ENCODE measurements at regions of chr14 and their contacts with region 1.

Region 1: GRCh38 chr14:21103710-21104447 is 3.0 kb downstream of the TMEM253 start:
- DNase-seq: peak; percentile 95
- ATAC-seq: peak; percentile 91
- H3K4me3 Mint-ChIP-seq: peak overlapping the region; percentile 94
- H3K27ac Mint-ChIP-seq: peak overlapping the region; percentile 84
- H3K4me1 Mint-ChIP-seq: peaks cover 38% of the 10 kb centered on the region
- H3K27me3 Mint-ChIP-seq: peaks cover 11% of the 10 kb centered on the region

Region 2: GRCh38 chr14:21071225-21072030 is 32.5 kb before region 1 on chr14:
- POLR2A ChIA-PET with region 1: interaction called, 17 read pairs
- DNase-seq: peak; percentile 59
- ATAC-seq: peak; percentile 57
- H3K4me3 Mint-ChIP-seq: peak overlapping the region; percentile 79
- H3K27ac Mint-ChIP-seq: no peak overlapping the region
- H3K4me1 Mint-ChIP-seq: peaks cover 29% of the 10 kb centered on the region
- H3K27me3 Mint-ChIP-seq: peaks cover 63% of the 10 kb centered on the region

Region 3: GRCh38 chr14:21087294-21088091 is 16.4 kb before region 1 on chr14:
- POLR2A ChIA-PET with region 1: interaction called, 18 read pairs
- DNase-seq: no peak
- ATAC-seq: peak; percentile 74
- H3K4me3 Mint-ChIP-seq: no peak overlapping the region
- H3K27ac Mint-ChIP-seq: peak overlapping the region; percentile 53
- H3K4me1 Mint-ChIP-seq: peaks cover 21% of the 10 kb centered on the region
- H3K27me3 Mint-ChIP-seq: peaks cover 2% of the 10 kb centered on the region

Measured in activated naive CD8-positive, alpha-beta T cell treated with anti-CD3 and anti-CD28 coated beads, Interleukin-2, amount 10 ng/mL, durations not matched to agents 7 days and 5 days (primary cell).